Activated naive CD4-positive, alpha-beta T cell treated with anti-CD3 and anti-CD28 coated beads for 36 hours (primary cell): ENCODE measurements at regions of chr12 and their contacts with region 1.

Region 1: GRCh38 chr12:108950991-108951739 is 69.7 kb downstream of the SVOP start:
- DNase-seq: peak; percentile 82
- H3K4me3 Mint-ChIP-seq: no peak overlapping the region
- H3K27ac Mint-ChIP-seq: no peak overlapping the region
- H3K4me1 Mint-ChIP-seq: no peaks in the 10 kb centered on the region
- H3K27me3 Mint-ChIP-seq: no peaks in the 10 kb centered on the region

Region 2: GRCh38 chr12:108803428-108804105 is 147.6 kb before region 1 on chr12:
- CTCF ChIA-PET with region 1: interaction called, 7 read pairs
- intact Hi-C with region 1: loop called (anchors 1 kb)
- DNase-seq: peak; percentile 83
- H3K4me3 Mint-ChIP-seq: no peak overlapping the region
- H3K27ac Mint-ChIP-seq: peak overlapping the region; percentile 76
- H3K4me1 Mint-ChIP-seq: peaks cover 7% of the 10 kb centered on the region
- H3K27me3 Mint-ChIP-seq: no peaks in the 10 kb centered on the region

Region 3: DNA sequence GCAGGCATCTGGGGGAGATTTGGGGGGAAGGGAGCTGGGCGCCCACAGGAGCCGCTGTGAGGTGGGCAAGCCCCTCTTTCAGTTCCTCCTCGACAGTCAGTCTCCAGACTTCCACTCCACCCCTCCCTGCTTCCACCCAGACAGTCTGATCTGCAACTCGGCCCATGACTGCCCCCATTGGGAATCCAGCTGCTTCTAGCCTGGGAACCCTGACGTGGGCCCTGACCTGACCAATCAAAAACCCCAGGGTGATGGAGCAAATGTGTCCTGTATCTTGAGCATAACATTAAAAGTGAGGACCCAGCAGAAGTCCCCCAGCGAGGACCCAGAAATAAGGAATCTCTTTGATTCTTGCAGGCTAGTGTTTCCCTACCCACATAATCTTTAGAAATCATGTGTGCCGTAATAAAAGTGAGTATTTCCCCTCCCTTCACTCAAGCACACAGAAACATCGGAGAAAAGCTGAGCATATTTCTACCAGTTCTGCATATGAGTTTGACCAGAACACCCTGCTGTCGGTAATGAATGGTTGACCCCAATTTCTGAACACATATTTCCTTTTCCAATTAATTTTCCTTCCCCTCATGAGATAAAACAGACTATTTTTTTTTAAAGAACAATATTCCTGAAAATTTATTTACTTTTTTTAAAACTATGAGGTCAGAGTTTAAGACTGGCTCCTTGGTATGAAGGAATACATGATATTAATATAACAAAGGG is 100.2 kb before region 1 on chr12:
- CTCF ChIA-PET with region 1: no interaction called
- intact Hi-C with region 1: no loop called
- DNase-seq: no peak
- H3K4me3 Mint-ChIP-seq: no peak overlapping the region
- H3K27ac Mint-ChIP-seq: no peak overlapping the region
- H3K4me1 Mint-ChIP-seq: peaks cover 11% of the 10 kb centered on the region
- H3K27me3 Mint-ChIP-seq: no peaks in the 10 kb centered on the region

Region 4: GRCh38 chr12:108884116-108885012 is 66.8 kb before region 1 on chr12:
- CTCF ChIA-PET with region 1: interaction called, 32 read pairs
- intact Hi-C with region 1: loop called (anchors 1 kb)
- DNase-seq: peak; percentile 84
- H3K4me3 Mint-ChIP-seq: no peak overlapping the region
- H3K27ac Mint-ChIP-seq: no peak overlapping the region
- H3K4me1 Mint-ChIP-seq: no peaks in the 10 kb centered on the region
- H3K27me3 Mint-ChIP-seq: no peaks in the 10 kb centered on the region

Region 5: DNA sequence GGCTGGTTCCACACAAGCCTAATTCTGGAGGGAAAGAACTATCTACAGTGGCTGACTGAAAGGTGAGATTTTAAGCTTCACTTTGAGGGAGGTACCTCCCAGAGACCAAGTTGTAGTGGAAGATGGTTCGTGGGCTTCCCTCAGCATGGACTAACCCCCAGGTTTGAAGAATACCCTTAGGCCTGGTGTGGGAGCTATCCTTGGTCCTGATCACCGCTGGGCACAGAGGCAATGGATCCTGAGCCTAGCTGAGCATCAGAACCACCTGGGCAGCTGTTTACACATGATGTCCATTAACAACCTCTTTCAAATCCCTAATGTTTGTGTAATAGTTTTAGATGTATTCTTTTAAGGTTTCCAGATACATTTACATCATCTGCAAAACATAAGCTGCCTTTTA is 61.0 kb before region 1 on chr12:
- CTCF ChIA-PET with region 1: interaction called, 32 read pairs
- intact Hi-C with region 1: no loop called
- DNase-seq: peak; percentile 36
- H3K4me3 Mint-ChIP-seq: no peak overlapping the region
- H3K27ac Mint-ChIP-seq: no peak overlapping the region
- H3K4me1 Mint-ChIP-seq: no peaks in the 10 kb centered on the region
- H3K27me3 Mint-ChIP-seq: no peaks in the 10 kb centered on the region

Region 6: GRCh38 chr12:108930756-108931155 is 20.4 kb before region 1 on chr12:
- CTCF ChIA-PET with region 1: interaction called, 14 read pairs
- intact Hi-C with region 1: no loop called
- DNase-seq: no peak
- H3K4me3 Mint-ChIP-seq: no peak overlapping the region
- H3K27ac Mint-ChIP-seq: no peak overlapping the region
- H3K4me1 Mint-ChIP-seq: no peaks in the 10 kb centered on the region
- H3K27me3 Mint-ChIP-seq: no peaks in the 10 kb centered on the region